Common myeloid progenitor, CD34-positive (primary cell): ENCODE measurements at regions of chr20 and their contacts with region 1.

Region 1: GRCh38 chr20:19661717-19662636 is 96.1 kb upstream of the RIN2 start:
- DNase-seq: peak; percentile 69 to 86 (median 78)
- H3K4me3 ChIP-seq: no peak overlapping the region
- H3K27ac ChIP-seq: no peak overlapping the region
- H3K4me1 ChIP-seq: peaks cover 0 to 15% (median 8%) of the 10 kb centered on the region in 4 experiments
- H3K27me3 ChIP-seq: no peaks in the 10 kb centered on the region

Region 2: DNA sequence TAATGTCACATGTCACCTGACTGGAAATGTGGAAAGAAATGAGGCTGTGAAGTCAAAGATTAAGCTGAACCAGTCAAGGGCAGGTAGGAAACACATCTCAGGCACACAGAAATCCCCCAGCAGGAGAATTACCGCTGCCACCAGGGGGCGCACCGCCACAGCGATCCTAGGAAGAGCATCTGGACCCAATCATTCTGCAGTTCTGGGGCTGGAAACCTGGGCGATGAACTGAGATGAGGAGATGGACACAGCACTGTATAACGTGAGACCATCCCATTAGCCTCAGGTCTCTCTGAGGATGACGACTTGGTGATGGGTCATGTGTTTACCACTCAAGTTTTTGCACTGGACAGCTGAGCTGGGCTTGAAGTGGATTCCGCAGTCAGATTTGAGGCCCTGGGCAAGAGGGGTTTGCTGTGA is 456.0 kb before region 1 on chr20:
- CTCF ChIA-PET with region 1: interaction called, 70 read pairs
- POLR2A ChIA-PET with region 1: no interaction called
- DNase-seq: peak; percentile 53 to 73 (median 70)
- H3K4me3 ChIP-seq: no peak overlapping the region
- H3K27ac ChIP-seq: no peak overlapping the region
- H3K4me1 ChIP-seq: no peaks in the 10 kb centered on the region
- H3K27me3 ChIP-seq: peaks cover 0 to 2% (median 0%) of the 10 kb centered on the region in 5 experiments

Region 3: DNA sequence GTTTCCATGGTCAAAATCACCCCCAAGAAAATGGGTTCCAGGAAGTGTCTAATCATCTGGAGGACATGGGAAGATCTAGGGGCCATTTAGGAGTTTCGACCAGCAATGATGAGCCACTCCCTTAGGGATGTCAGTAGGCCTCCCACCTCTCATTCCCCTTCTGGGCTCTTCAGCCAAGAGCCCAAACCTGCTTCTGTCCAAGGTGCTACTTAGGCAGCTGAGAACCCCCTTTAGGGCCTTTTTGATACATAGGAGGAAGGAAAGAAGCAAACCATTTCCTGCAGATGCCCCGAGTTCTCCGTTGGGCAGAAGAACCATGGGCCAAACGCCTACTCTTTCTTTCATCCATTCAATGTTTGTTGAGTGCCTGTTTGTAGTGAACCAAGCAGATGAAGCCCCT is 45.4 kb before region 1 on chr20:
- CTCF ChIA-PET with region 1: no interaction called
- POLR2A ChIA-PET with region 1: no interaction called
- DNase-seq: peak in 1 of 3 donors; percentile 10
- H3K4me3 ChIP-seq: no peak overlapping the region
- H3K27ac ChIP-seq: no peak overlapping the region
- H3K4me1 ChIP-seq: peaks cover 6 to 23% (median 13%) of the 10 kb centered on the region in 4 experiments
- H3K27me3 ChIP-seq: no peaks in the 10 kb centered on the region

Region 4: GRCh38 chr20:19628570-19629169 is 33.3 kb before region 1 on chr20:
- CTCF ChIA-PET with region 1: interaction called, 46 read pairs
- POLR2A ChIA-PET with region 1: no interaction called
- DNase-seq: peak; percentile 57 to 76 (median 70)
- H3K4me3 ChIP-seq: no peak overlapping the region
- H3K27ac ChIP-seq: no peak overlapping the region
- H3K4me1 ChIP-seq: no peaks in the 10 kb centered on the region
- H3K27me3 ChIP-seq: no peaks in the 10 kb centered on the region

Region 5: DNA sequence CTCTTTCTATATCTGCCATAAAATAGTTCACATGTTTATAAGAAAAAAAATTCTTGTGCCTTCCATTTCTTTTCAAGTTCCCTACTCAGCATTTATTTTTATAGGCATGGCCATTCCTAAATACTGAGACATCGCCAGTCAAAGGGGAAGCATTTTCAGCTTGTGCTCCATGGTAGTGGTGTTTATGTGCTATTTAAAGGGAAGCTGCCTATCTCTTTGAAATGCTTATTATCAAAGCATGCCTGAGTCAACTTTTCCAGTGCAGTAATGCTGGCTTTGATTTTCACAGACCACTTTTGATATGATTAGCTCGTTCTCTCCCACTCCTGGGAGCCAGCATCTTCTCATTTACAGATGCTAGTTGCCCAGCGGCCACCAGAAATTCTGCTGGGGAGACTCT is 28.0 kb before region 1 on chr20:
- CTCF ChIA-PET with region 1: interaction called, 46 read pairs
- POLR2A ChIA-PET with region 1: no interaction called
- DNase-seq: no peak
- H3K4me3 ChIP-seq: no peak overlapping the region
- H3K27ac ChIP-seq: no peak overlapping the region
- H3K4me1 ChIP-seq: no peaks in the 10 kb centered on the region
- H3K27me3 ChIP-seq: no peaks in the 10 kb centered on the region

Region 6: DNA sequence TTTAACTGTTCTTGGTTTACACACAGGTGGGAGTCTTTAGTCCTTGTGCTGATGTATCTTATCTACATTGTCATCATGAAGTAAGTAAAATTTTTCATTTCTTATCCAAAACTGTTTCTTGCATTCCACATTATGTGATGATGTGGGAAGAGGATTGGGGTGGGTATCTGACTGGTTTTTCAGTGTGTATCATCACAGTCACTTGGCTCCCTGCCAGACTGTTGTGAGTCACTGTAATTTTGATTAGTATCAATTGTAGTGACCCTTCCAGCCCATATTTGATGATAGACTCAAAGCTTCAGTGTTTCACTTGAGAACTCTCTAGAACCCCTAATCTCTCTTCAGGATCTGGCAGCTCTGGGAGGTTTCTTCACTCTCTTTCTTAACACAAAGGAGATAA is 11.6 kb after region 1 on chr20:
- CTCF ChIA-PET with region 1: interaction called, 11 read pairs
- POLR2A ChIA-PET with region 1: interaction called, 3 read pairs
- DNase-seq: no peak
- H3K4me3 ChIP-seq: no peak overlapping the region
- H3K27ac ChIP-seq: no peak overlapping the region
- H3K4me1 ChIP-seq: peaks cover 0 to 7% (median 5%) of the 10 kb centered on the region in 4 experiments
- H3K27me3 ChIP-seq: no peaks in the 10 kb centered on the region

Region 7: GRCh38 chr20:19885939-19886660 is 224.1 kb after region 1 on chr20:
- CTCF ChIA-PET with region 1: no interaction called
- POLR2A ChIA-PET with region 1: no interaction called
- DNase-seq: no peak
- H3K4me3 ChIP-seq: no peak overlapping the region
- H3K27ac ChIP-seq: no peak overlapping the region
- H3K4me1 ChIP-seq: peaks cover 0 to 13% (median 4%) of the 10 kb centered on the region in 4 experiments
- H3K27me3 ChIP-seq: no peaks in the 10 kb centered on the region